ENCODE measurements at regions of chr19 and their contacts with region 1.

Region 1: GRCh38 chr19:16185123-16185767 is at the start of gene FAM32A:
- DNase-seq: peak; percentile 97 to 100 (median 98)
- ATAC-seq: peak; percentile 93
- H3K4me3 ChIP-seq: peak within 1 kb of the TSS; percentile 92
- H3K4me3 Mint-ChIP-seq: peak within 1 kb of the TSS; percentile 93
- H3K27ac ChIP-seq: peak within 1 kb of the TSS; percentile 83 to 85
- H3K27ac Mint-ChIP-seq: peak within 1 kb of the TSS; percentile 87
- H3K4me1 ChIP-seq: peaks cover 44% of the 10 kb centered on the region
- H3K4me1 Mint-ChIP-seq: peaks cover 29% of the 10 kb centered on the region
- H3K27me3 ChIP-seq: no peaks in the 10 kb centered on the region
- H3K27me3 Mint-ChIP-seq: no peaks in the 10 kb centered on the region
- CTCF ChIP-seq: no peak
- total RNA-seq, gene FAM32A: 44.5 to 50.3 TPM

Region 2: GRCh38 chr19:15584541-15585115 is 600.6 kb before region 1 on chr19:
- CTCF ChIA-PET with region 1: no interaction called
- POLR2A ChIA-PET with region 1: no interaction called
- intact Hi-C with region 1: loop called in 1 of 2 experiments (anchors 2 kb)
- DNase-seq: peak; percentile 74 to 90 (median 80)
- ATAC-seq: peak; percentile 98
- H3K4me3 ChIP-seq: peak overlapping the region; percentile 29
- H3K4me3 Mint-ChIP-seq: no peak overlapping the region
- H3K27ac ChIP-seq: no peak overlapping the region
- H3K27ac Mint-ChIP-seq: no peak overlapping the region
- H3K4me1 ChIP-seq: peaks cover 8% of the 10 kb centered on the region
- H3K4me1 Mint-ChIP-seq: peaks cover 6% of the 10 kb centered on the region
- H3K27me3 ChIP-seq: peaks cover 12 to 14% of the 10 kb centered on the region in 2 experiments
- H3K27me3 Mint-ChIP-seq: peaks cover 36% of the 10 kb centered on the region
- CTCF ChIP-seq: peak; percentile 93

Region 3: GRCh38 chr19:16041299-16041990 is 143.8 kb before region 1 on chr19:
- CTCF ChIA-PET with region 1: interaction called, 15 read pairs
- POLR2A ChIA-PET with region 1: interaction called, 5 read pairs
- intact Hi-C with region 1: loop called (anchors 1 kb)
- DNase-seq: peak; percentile 55 to 84 (median 68)
- ATAC-seq: peak; percentile 79
- H3K4me3 ChIP-seq: peak overlapping the region; percentile 11
- H3K4me3 Mint-ChIP-seq: no peak overlapping the region
- H3K27ac ChIP-seq: no peak overlapping the region
- H3K27ac Mint-ChIP-seq: no peak overlapping the region
- H3K4me1 ChIP-seq: peaks cover 10% of the 10 kb centered on the region
- H3K4me1 Mint-ChIP-seq: peaks cover 5% of the 10 kb centered on the region
- H3K27me3 ChIP-seq: no peaks in the 10 kb centered on the region
- H3K27me3 Mint-ChIP-seq: no peaks in the 10 kb centered on the region
- CTCF ChIP-seq: peak; percentile 98

Region 4: DNA sequence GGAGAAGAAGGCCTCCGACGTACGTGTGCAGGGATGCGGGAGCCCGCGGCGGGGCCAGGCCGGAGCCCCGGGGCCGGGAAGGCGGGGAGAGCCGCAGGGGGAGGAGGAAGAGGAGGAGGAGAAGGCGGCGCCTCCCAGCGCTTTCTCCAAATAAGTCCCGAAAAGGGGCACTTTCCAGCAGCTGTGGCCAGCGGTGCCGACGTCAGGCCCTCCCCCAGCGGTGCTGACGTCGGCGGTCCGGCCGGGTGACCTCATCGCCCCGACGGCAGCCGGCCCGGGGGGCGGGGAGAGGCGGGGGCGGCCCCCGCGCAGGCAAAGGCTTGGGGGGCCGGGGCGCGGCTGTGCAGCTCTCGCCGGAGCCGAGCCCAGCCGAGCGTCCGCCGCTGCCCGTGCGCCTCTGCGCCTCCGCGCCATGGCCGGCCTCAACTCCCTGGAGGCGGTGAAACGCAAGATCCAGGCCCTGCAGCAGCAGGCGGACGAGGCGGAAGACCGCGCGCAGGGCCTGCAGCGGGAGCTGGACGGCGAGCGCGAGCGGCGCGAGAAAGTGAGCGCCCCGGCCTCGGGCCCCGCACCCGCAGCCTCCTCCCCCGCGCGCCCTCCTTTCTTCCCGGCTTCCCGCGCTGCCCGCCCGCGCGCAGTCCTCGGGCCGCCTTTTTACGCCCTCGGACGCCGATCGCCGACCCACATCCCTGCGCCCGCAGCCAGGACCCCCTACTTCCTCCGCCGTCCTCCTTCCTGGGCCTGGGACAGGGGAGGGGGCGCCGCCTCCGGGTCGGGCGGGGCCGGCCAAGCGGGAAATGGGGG is 108.9 kb before region 1 on chr19 and contains the start of gene TPM4:
- CTCF ChIA-PET with region 1: no interaction called
- POLR2A ChIA-PET with region 1: interaction called, 17 read pairs
- intact Hi-C with region 1: loop called in 1 of 2 experiments (anchors 10 kb)
- DNase-seq: peak; percentile 46 to 94 (median 74)
- ATAC-seq: peak; percentile 26
- H3K4me3 ChIP-seq: peak within 1 kb of the TSS; percentile 87
- H3K4me3 Mint-ChIP-seq: peak within 1 kb of the TSS; percentile 85
- H3K27ac ChIP-seq: peak within 1 kb of the TSS; percentile 72 to 83
- H3K27ac Mint-ChIP-seq: peak within 1 kb of the TSS; percentile 94
- H3K4me1 ChIP-seq: peaks cover 83% of the 10 kb centered on the region
- H3K4me1 Mint-ChIP-seq: peaks cover 73% of the 10 kb centered on the region
- H3K27me3 ChIP-seq: no peaks in the 10 kb centered on the region
- H3K27me3 Mint-ChIP-seq: no peaks in the 10 kb centered on the region
- CTCF ChIP-seq: no peak
- total RNA-seq, gene TPM4: 182 to 185 TPM

Region 5: GRCh38 chr19:16197622-16198369 is 12.6 kb after region 1 on chr19 and contains the start of gene AP1M1:
- CTCF ChIA-PET with region 1: interaction called, 5 read pairs
- POLR2A ChIA-PET with region 1: interaction called, 22 read pairs
- intact Hi-C with region 1: loop called (anchors 1 kb)
- DNase-seq: peak; percentile 96 to 99 (median 99)
- ATAC-seq: peak; percentile 87
- H3K4me3 ChIP-seq: peak within 1 kb of the TSS; percentile 90
- H3K4me3 Mint-ChIP-seq: peak within 1 kb of the TSS; percentile 95
- H3K27ac ChIP-seq: peak within 1 kb of the TSS; percentile 69 to 81
- H3K27ac Mint-ChIP-seq: peak within 1 kb of the TSS; percentile 92
- H3K4me1 ChIP-seq: peaks cover 35% of the 10 kb centered on the region
- H3K4me1 Mint-ChIP-seq: peaks cover 37% of the 10 kb centered on the region
- H3K27me3 ChIP-seq: no peaks in the 10 kb centered on the region
- H3K27me3 Mint-ChIP-seq: no peaks in the 10 kb centered on the region
- CTCF ChIP-seq: peak; percentile 6
- total RNA-seq, gene AP1M1: 52.1 to 58.3 TPM

Region 6: GRCh38 chr19:16371540-16371986 is 186.3 kb after region 1 on chr19:
- CTCF ChIA-PET with region 1: no interaction called
- POLR2A ChIA-PET with region 1: interaction called, 10 read pairs
- intact Hi-C with region 1: no loop called
- DNase-seq: peak; percentile 83 to 97 (median 92)
- ATAC-seq: peak; percentile 54
- H3K4me3 ChIP-seq: peak overlapping the region; percentile 44
- H3K4me3 Mint-ChIP-seq: no peak overlapping the region
- H3K27ac ChIP-seq: peak overlapping the region; percentile 90 to 97
- H3K27ac Mint-ChIP-seq: no peak overlapping the region
- H3K4me1 ChIP-seq: peaks cover 95% of the 10 kb centered on the region
- H3K4me1 Mint-ChIP-seq: peaks cover 33% of the 10 kb centered on the region
- H3K27me3 ChIP-seq: no peaks in the 10 kb centered on the region
- H3K27me3 Mint-ChIP-seq: no peaks in the 10 kb centered on the region
- CTCF ChIP-seq: no peak